ENCODE measurements at regions of chr16 and their contacts with region 1.

Region 1: DNA sequence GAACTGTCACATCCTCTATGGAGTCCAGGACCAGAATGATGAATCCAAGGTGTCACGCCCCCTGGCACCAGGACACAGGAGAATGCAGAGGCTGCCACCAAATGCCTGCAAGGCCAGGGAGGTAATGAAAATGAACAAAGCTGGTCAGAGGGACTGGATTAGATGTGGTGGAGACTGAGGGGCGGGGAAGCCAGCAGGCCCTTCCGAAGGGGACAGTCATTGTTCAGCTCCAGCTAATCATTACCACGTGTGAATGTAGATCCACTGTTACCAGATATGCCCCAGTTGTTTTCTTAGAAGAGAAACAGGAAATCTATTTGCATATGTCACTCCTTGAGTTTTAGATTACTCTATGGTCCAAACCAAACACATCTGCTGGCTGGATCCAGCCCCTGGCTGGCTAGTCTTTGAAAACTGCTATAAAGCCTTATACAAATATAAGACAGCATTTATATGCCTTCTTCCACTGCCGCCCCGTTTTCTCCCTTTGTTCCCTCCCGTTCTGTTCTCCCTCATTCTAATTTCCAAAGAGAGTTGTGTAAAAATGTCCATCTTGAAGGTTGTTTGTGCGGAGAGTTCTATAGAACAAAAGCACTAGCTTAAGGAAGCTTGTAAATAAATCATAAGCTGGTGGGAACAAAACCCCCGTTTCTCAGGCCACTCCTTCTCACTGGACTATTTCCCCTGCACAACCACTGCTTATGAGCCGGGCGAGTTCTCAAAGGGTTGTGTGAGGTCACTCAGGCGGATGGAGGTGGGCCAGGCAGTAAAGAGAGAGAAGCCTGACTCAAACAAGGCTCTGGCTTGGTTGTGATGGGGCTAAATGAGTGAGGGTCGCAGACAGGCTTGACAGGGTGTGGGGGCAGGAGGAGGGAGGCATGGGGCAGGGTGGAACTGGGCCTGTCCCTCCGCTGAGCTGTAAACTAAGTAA is 14.2 kb downstream of the CRYM start:
- DNase-seq: no peak
- H3K4me3 ChIP-seq: no peak overlapping the region
- H3K27ac ChIP-seq: no peak overlapping the region
- H3K4me1 ChIP-seq: no peaks in the 10 kb centered on the region
- H3K27me3 ChIP-seq: no peaks in the 10 kb centered on the region
- CTCF ChIP-seq: no peak
- EP300 ChIP-seq: no peak
- POLR2A ChIP-seq: no peak

Region 2: GRCh38 chr16:21218153-21218552 is 45.8 kb before region 1 on chr16:
- intact Hi-C with region 1: loop called in 1 of 4 experiments (anchors 10 kb)
- DNase-seq: no peak
- H3K4me3 ChIP-seq: no peak overlapping the region
- H3K27ac ChIP-seq: no peak overlapping the region
- H3K4me1 ChIP-seq: no peaks in the 10 kb centered on the region
- H3K27me3 ChIP-seq: no peaks in the 10 kb centered on the region
- CTCF ChIP-seq: no peak
- EP300 ChIP-seq: no peak
- POLR2A ChIP-seq: no peak

Region 3: DNA sequence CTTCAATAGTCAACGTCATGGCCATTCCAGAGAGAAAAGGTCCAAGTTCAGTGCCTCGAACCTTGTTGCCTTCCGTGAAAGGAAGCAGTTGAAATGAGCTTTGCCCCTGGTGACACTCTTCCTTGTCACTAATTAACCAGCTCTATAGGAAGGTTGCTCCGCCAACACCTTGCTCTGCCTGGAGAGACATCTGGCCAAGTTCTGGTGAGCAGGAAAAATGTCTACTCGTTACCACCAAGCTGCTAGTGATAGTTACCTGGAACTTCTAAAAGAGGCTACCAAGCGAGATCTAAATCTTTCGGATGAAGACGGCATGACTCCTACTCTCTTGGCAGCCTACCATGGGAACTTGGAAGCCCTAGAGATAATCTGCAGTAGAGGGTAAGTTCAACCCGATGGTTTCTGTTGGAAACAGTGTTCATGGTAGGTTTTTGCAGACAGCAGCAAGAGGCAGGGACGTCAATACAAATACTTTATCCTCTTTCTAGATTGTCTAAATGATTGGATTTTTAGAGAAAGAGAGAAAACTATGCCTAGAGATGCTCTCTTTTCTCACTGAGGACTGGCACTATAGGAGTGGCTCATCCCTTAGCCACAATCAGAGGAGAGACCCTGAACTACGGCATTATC is 30.3 kb before region 1 on chr16 and contains the start of gene ANKS4B:
- intact Hi-C with region 1: no loop called
- DNase-seq: no peak
- H3K4me3 ChIP-seq: no peak within 1 kb of the TSS
- H3K27ac ChIP-seq: no peak within 1 kb of the TSS
- H3K4me1 ChIP-seq: no peaks in the 10 kb centered on the region
- H3K27me3 ChIP-seq: no peaks in the 10 kb centered on the region
- CTCF ChIP-seq: no peak
- EP300 ChIP-seq: no peak
- POLR2A ChIP-seq: no peak
- total RNA-seq, gene ANKS4B: under 0.01 to 0.05 TPM in 2 of 7 donors, not detected in the others

Measured in ovary (tissue), 10 donors.